Mammary epithelial cell (primary cell): ENCODE measurements at regions of chr20 and their contacts with region 1.

Region 1: GRCh38 chr20:37336369-37337207 is 9.4 kb upstream of the SRC start:
- DNase-seq: no peak
- H3K4me3 ChIP-seq: no peak overlapping the region
- H3K27ac ChIP-seq: no peak overlapping the region
- H3K4me1 ChIP-seq: peaks cover 30% of the 10 kb centered on the region
- H3K27me3 ChIP-seq: no peaks in the 10 kb centered on the region
- CTCF ChIP-seq: no peak

Region 2: GRCh38 chr20:37288091-37288490 is 48.5 kb before region 1 on chr20:
- CTCF ChIA-PET with region 1: interaction called, 12 read pairs
- dilution Hi-C with region 1: no loop called
- in situ Hi-C with region 1: no loop called
- intact Hi-C with region 1: no loop called
- DNase-seq: peak; percentile 55
- H3K4me3 ChIP-seq: no peak overlapping the region
- H3K27ac ChIP-seq: no peak overlapping the region
- H3K4me1 ChIP-seq: peaks cover 8% of the 10 kb centered on the region
- H3K27me3 ChIP-seq: no peaks in the 10 kb centered on the region
- CTCF ChIP-seq: no peak

Region 3: GRCh38 chr20:37295001-37295400 is 41.6 kb before region 1 on chr20:
- CTCF ChIA-PET with region 1: no interaction called
- dilution Hi-C with region 1: loop called (anchors 5 kb)
- in situ Hi-C with region 1: no loop called
- intact Hi-C with region 1: loop called (anchors 2 kb)
- DNase-seq: peak; percentile 99
- H3K4me3 ChIP-seq: peak overlapping the region in 1 of 3 experiments; percentile 18
- H3K27ac ChIP-seq: peak overlapping the region; percentile 90
- H3K4me1 ChIP-seq: peaks cover 61% of the 10 kb centered on the region
- H3K27me3 ChIP-seq: no peaks in the 10 kb centered on the region
- CTCF ChIP-seq: no peak

Region 4: DNA sequence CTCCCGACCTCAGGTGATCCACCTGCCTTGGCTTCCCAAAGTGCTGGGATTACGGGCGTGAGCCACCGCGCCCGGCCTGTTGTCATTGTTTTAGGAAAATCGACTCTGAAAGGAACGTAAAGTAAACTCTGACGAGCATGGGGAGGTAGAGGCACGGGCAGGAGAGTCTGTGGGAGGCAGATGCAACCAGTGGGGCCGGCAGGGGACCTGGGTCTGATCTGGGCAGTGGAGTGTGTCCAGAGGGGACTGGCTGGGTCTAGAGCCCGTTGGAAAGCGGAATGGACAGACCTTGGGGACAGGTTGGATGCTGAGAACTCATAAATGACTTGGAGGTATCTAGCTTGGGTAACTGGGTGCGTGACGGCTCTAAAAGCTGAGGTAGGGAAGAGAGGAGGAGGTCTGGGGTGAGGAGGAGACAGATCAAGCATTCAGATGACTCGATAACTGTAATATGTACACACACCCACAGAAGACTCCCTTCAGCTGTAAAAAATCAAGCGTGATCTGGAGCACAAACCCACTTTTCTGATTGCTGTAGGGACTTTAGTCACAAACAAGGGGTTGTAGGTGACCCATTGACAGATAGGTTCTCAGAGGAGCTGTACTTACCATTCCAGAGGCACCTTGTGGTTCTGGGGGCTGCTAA is 24.8 kb before region 1 on chr20:
- CTCF ChIA-PET with region 1: no interaction called
- dilution Hi-C with region 1: no loop called
- in situ Hi-C with region 1: no loop called
- intact Hi-C with region 1: loop called (anchors 1 kb)
- DNase-seq: no peak
- H3K4me3 ChIP-seq: no peak overlapping the region
- H3K27ac ChIP-seq: no peak overlapping the region
- H3K4me1 ChIP-seq: peaks cover 72% of the 10 kb centered on the region
- H3K27me3 ChIP-seq: no peaks in the 10 kb centered on the region
- CTCF ChIP-seq: no peak

Region 5: GRCh38 chr20:37356387-37356786 is 19.8 kb after region 1 on chr20:
- CTCF ChIA-PET with region 1: no interaction called
- dilution Hi-C with region 1: no loop called
- in situ Hi-C with region 1: no loop called
- intact Hi-C with region 1: loop called (anchors 1 kb)
- DNase-seq: peak; percentile 59
- H3K4me3 ChIP-seq: no peak overlapping the region
- H3K27ac ChIP-seq: no peak overlapping the region
- H3K4me1 ChIP-seq: peaks cover 48% of the 10 kb centered on the region
- H3K27me3 ChIP-seq: no peaks in the 10 kb centered on the region
- CTCF ChIP-seq: peak in 1 of 2 donors; percentile 4

Region 6: DNA sequence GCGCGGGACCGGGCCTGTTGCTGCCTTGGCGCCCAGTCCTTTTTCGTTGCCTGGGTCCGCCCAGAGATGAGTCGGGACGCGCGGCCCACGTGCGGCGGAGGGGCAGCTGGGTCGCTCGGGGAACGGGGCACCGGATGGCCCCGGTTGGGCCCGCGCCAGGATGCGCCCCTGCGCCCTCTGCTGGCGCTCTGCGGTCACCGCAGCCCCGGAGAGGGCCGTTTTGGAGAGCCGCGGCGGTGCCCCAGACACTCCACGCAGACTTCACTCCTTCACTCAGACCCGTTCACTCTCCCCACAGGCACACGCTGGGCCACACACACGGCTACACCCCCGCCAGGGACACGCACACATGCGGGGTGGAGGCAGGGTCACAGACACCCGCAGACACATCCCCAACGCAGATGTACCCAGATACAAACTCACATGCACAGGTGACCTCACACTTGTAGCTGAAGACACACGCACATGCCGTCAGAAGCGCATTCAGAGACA is 48.1 kb after region 1 on chr20:
- CTCF ChIA-PET with region 1: no interaction called
- dilution Hi-C with region 1: no loop called
- in situ Hi-C with region 1: no loop called
- intact Hi-C with region 1: loop called (anchors 2 kb)
- DNase-seq: peak; percentile 30
- H3K4me3 ChIP-seq: no peak overlapping the region
- H3K27ac ChIP-seq: no peak overlapping the region
- H3K4me1 ChIP-seq: peaks cover 8% of the 10 kb centered on the region
- H3K27me3 ChIP-seq: no peaks in the 10 kb centered on the region
- CTCF ChIP-seq: peak; percentile 56 to 92

Region 7: GRCh38 chr20:37421988-37422387 is 85.4 kb after region 1 on chr20:
- CTCF ChIA-PET with region 1: no interaction called
- dilution Hi-C with region 1: no loop called
- in situ Hi-C with region 1: no loop called
- intact Hi-C with region 1: no loop called
- DNase-seq: no peak
- H3K4me3 ChIP-seq: no peak overlapping the region
- H3K27ac ChIP-seq: no peak overlapping the region
- H3K4me1 ChIP-seq: no peaks in the 10 kb centered on the region
- H3K27me3 ChIP-seq: no peaks in the 10 kb centered on the region
- CTCF ChIP-seq: no peak

Region 8: DNA sequence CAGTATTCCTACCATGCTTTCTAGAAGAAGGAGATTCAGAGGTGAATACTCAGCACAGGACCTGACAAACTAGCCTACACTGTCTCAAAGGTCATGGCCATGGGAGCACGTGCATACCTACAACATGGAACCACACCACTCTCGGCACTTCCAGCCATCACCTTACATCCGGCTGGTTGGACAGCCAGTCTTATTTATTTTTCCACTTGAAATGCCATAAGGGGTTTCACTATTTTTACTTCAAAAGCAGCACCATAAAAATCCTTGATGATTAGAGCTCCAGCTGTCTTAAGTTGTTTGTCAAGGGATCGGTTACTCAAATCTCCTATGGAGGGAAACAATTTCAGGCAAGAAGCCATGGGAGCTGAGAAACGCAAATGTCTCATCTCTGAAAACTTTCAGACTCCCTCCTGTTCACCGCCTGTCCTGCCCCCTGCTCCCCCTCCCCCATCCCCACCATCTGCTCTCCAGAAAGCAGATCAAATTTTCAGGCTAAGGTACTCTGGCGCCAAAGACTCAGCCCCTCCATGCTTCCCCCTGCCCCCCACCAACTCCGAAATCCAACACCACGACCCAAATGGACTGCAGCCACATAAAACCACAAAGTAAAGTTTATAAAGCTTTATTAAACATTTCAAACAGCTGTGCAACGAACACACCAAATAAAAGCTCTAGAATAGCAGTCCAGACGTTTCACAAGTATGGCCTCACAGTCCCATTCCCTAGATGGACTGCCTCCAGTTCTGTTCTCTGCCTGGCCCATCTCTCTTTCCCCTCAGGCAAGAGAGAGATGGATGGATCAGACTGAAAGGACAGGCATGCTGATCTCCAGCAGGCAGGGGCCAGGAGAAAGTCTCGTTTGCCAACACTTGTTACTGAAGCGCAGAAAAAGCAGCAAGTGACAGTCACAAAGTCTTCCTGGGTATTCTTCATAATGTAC is 180.5 kb after region 1 on chr20:
- CTCF ChIA-PET with region 1: no interaction called
- dilution Hi-C with region 1: no loop called
- in situ Hi-C with region 1: no loop called
- intact Hi-C with region 1: no loop called
- DNase-seq: no peak
- H3K4me3 ChIP-seq: no peak overlapping the region
- H3K27ac ChIP-seq: no peak overlapping the region
- H3K4me1 ChIP-seq: peaks cover 26% of the 10 kb centered on the region
- H3K27me3 ChIP-seq: no peaks in the 10 kb centered on the region
- CTCF ChIP-seq: no peak